GM10248 (cell line): ENCODE measurements at regions of chr1 and their contacts with region 1.

Region 1: DNA sequence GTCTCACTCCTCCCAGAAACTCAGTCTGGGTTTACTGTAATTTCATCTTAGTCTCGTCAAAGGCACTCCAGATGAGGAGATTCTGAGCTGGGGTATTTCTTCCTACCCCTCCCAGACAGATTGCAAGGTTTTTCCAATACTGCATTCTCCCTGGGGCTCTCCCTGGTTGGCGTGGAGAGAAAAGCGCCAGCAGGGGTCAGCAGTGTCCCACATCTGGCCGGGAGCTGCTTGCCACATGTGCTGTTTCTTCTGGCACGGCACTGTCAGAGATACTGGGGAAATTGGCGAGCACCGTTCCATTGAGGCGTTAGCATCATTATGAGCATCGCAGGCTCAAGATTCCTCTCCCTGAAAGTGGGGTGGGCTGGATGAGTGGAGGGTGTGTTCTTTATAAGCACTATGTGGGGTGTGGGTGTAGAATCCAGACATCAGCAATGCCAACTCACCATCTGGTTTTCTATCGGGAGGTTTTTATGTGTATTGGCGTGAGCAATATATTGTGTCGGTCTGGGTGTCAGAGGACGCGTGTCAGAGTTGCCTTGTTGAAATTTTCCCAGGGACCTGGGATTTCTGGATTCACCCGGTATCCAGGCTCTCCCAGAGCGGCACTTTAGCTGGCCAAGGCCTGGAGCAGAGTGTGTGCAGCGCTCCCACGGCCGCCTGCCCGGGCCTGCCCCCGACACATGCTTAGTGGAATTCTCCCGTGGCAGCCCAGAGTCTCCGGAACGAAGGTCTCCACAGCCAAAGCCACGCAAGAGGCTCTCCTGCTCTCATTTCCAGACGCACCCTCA is 8.0 kb upstream of the NAV1 start:
- DNase-seq: peak; percentile 73
- CTCF ChIP-seq: peak; percentile 67

Region 2: DNA sequence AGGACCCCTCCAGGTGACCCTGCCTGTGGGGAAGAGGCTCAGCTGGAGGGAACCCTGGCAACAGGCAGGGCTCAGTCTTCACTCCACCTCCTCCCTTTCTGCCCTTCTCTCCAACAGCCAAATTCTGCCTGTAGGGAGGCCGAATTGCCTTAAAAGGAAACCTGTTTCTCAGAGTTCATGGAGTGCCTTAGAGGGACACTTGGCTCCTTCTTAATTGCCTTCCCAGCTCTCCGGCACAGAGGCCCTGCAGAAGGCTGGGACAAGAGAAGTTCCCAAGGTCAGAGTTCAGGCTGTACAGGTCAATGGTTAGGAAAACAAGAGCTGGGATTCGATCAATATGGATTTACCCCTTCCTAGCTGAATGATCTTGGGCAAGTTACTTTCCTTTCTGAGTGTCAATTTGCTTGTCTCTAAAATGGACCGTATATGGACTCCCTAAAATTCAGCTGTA is 30.2 kb before region 1 on chr1:
- CTCF ChIA-PET with region 1: no interaction called
- POLR2A ChIA-PET with region 1: no interaction called
- DNase-seq: no peak
- CTCF ChIP-seq: no peak

Region 3: GRCh38 chr1:201703621-201704439 is 172.9 kb after region 1 on chr1:
- CTCF ChIA-PET with region 1: interaction called, 36 read pairs
- POLR2A ChIA-PET with region 1: no interaction called
- DNase-seq: peak; percentile 86
- CTCF ChIP-seq: peak; percentile 92